B cell (primary cell): ENCODE measurements at regions of chr21 and their contacts with region 1.

Region 1: DNA sequence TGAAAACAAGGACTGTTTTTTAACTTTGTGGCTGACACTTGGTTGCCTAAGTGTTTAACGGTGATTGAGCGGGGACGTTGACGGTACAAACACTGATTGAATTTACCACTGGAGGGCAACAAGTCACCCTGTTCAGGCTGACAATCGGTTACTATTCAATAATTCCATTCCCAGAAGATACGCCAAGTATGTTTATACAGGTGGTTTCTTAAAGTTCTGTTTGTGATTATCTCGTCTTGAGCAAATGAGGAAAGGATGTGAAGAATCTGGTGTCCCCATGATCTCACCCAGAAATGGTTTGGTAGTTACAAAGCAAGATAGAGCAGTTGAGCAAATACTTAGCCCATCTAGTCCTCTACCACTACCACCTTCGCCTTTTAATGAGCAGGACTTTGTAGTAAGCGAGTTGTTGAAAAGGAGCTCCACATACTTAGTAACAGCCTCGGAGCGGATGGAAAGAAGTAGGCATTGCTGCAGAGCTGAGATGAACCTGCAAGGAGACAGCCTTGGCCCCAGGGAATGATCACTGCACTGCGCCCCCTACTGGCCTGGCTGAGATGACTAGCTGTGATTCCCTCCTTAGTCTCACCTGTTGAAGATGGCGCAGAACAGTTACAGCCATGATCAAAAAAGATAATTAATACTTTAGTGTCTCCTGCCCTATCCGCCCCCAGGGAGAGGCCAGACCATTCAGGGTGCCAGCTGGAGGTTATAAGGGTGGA is 36.3 kb downstream of the IFNAR1 start:
- DNase-seq: peak; percentile 89
- ATAC-seq: peak; percentile 79
- H3K4me3 ChIP-seq: peak overlapping the region; percentile 21 to 50 (median 49)
- H3K4me3 Mint-ChIP-seq: peak overlapping the region; percentile 89
- H3K27ac ChIP-seq: peak overlapping the region; percentile 81 to 93
- H3K27ac Mint-ChIP-seq: peak overlapping the region; percentile 96
- H3K4me1 ChIP-seq: peaks cover 37 to 41% of the 10 kb centered on the region in 2 donors
- H3K4me1 Mint-ChIP-seq: peaks cover 44% of the 10 kb centered on the region
- H3K27me3 ChIP-seq: no peaks in the 10 kb centered on the region
- H3K27me3 Mint-ChIP-seq: no peaks in the 10 kb centered on the region
- CTCF ChIP-seq: peak; percentile 90

Region 2: GRCh38 chr21:33317786-33318486 is 43.1 kb before region 1 on chr21:
- CTCF ChIA-PET with region 1: interaction called, 10 read pairs
- POLR2A ChIA-PET with region 1: no interaction called
- intact Hi-C with region 1: no loop called
- DNase-seq: no peak
- ATAC-seq: no peak
- H3K4me3 ChIP-seq: no peak overlapping the region
- H3K4me3 Mint-ChIP-seq: no peak overlapping the region
- H3K27ac ChIP-seq: no peak overlapping the region
- H3K27ac Mint-ChIP-seq: no peak overlapping the region
- H3K4me1 ChIP-seq: peaks cover 4 to 5% of the 10 kb centered on the region in 2 donors
- H3K4me1 Mint-ChIP-seq: peaks cover 8% of the 10 kb centered on the region
- H3K27me3 ChIP-seq: no peaks in the 10 kb centered on the region
- H3K27me3 Mint-ChIP-seq: no peaks in the 10 kb centered on the region
- CTCF ChIP-seq: no peak

Region 3: GRCh38 chr21:33348706-33349105 is 12.3 kb before region 1 on chr21:
- CTCF ChIA-PET with region 1: interaction called, 39 read pairs
- POLR2A ChIA-PET with region 1: no interaction called
- intact Hi-C with region 1: no loop called
- DNase-seq: no peak
- ATAC-seq: no peak
- H3K4me3 ChIP-seq: no peak overlapping the region
- H3K4me3 Mint-ChIP-seq: no peak overlapping the region
- H3K27ac ChIP-seq: no peak overlapping the region
- H3K27ac Mint-ChIP-seq: no peak overlapping the region
- H3K4me1 ChIP-seq: peaks cover 10% of the 10 kb centered on the region in 2 donors
- H3K4me1 Mint-ChIP-seq: peaks cover 13% of the 10 kb centered on the region
- H3K27me3 ChIP-seq: no peaks in the 10 kb centered on the region
- H3K27me3 Mint-ChIP-seq: no peaks in the 10 kb centered on the region
- CTCF ChIP-seq: no peak

Region 4: DNA sequence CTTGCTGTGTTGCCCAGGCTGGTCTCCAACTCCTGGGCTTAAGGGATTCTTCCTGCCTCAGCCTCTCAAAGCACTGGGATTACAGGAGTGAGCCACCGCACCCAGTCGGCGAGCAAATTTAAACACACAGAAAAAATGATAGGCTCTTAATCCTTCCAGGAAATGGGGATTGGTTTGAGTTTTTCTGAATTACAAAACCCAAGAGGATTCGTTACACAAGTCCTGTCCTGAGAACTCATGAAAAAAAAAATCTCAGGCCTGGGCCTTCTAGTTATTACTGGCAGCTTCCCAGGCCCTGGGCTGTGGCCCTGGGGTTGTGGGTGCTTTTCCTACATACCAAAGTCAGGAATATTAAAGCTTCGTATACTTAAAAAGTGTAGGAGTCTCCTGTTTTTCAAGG is 35.9 kb after region 1 on chr21:
- CTCF ChIA-PET with region 1: interaction called, 27 read pairs
- POLR2A ChIA-PET with region 1: interaction called, 39 read pairs
- intact Hi-C with region 1: no loop called
- DNase-seq: no peak
- ATAC-seq: no peak
- H3K4me3 ChIP-seq: no peak overlapping the region
- H3K4me3 Mint-ChIP-seq: no peak overlapping the region
- H3K27ac ChIP-seq: no peak overlapping the region
- H3K27ac Mint-ChIP-seq: no peak overlapping the region
- H3K4me1 ChIP-seq: peaks cover 41 to 62% of the 10 kb centered on the region in 2 donors
- H3K4me1 Mint-ChIP-seq: peaks cover 58% of the 10 kb centered on the region
- H3K27me3 ChIP-seq: no peaks in the 10 kb centered on the region
- H3K27me3 Mint-ChIP-seq: no peaks in the 10 kb centered on the region
- CTCF ChIP-seq: no peak

Region 5: DNA sequence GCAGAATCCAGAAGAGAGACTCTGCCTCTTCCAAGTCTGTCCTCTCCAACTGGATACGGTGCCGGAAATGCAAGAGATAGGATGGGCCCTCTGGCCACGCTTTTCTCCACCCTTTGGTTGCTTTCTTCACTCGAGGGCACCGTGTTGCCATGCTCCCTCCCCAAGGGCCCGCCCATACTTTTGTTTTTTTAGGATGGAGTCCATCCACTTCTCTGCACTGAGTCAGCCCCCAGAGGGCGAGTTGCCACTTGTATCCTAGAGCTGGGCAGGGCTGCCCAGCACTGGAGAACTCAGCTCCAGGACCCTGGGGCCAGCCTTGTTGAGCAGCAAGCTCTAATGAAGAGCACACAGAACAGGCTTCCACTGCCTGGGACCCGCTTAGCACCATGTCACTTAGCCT is 67.6 kb after region 1 on chr21:
- CTCF ChIA-PET with region 1: interaction called, 25 read pairs
- POLR2A ChIA-PET with region 1: interaction called, 3 read pairs
- intact Hi-C with region 1: no loop called
- DNase-seq: no peak
- ATAC-seq: no peak
- H3K4me3 ChIP-seq: no peak overlapping the region
- H3K4me3 Mint-ChIP-seq: no peak overlapping the region
- H3K27ac ChIP-seq: no peak overlapping the region
- H3K27ac Mint-ChIP-seq: peak overlapping the region; percentile 59
- H3K4me1 ChIP-seq: peaks cover 6 to 14% of the 10 kb centered on the region in 2 donors
- H3K4me1 Mint-ChIP-seq: peaks cover 16% of the 10 kb centered on the region
- H3K27me3 ChIP-seq: no peaks in the 10 kb centered on the region
- H3K27me3 Mint-ChIP-seq: no peaks in the 10 kb centered on the region
- CTCF ChIP-seq: no peak